Activated CD8-positive, alpha-beta memory T cell treated with anti-CD3 and anti-CD28 coated beads, Interleukin-2, amount 10 ng/mL, durations not matched to agents 7 days and 5 days (primary cell): ENCODE measurements at regions of chr11 and their contacts with region 1.

Region 1: GRCh38 chr11:123054301-123055065 is 7.5 kb downstream of the HSPA8 start:
- DNase-seq: no peak
- ATAC-seq: peak; percentile 48
- H3K4me3 Mint-ChIP-seq: no peak overlapping the region
- H3K27ac Mint-ChIP-seq: peak overlapping the region; percentile 100
- H3K4me1 Mint-ChIP-seq: peaks cover 49% of the 10 kb centered on the region
- H3K27me3 Mint-ChIP-seq: no peaks in the 10 kb centered on the region

Region 2: GRCh38 chr11:123020968-123021367 is 33.5 kb before region 1 on chr11:
- CTCF ChIA-PET with region 1: interaction called, 58 read pairs
- DNase-seq: peak; percentile 53
- ATAC-seq: peak; percentile 86
- H3K4me3 Mint-ChIP-seq: no peak overlapping the region
- H3K27ac Mint-ChIP-seq: no peak overlapping the region
- H3K4me1 Mint-ChIP-seq: peaks cover 9% of the 10 kb centered on the region
- H3K27me3 Mint-ChIP-seq: peaks cover 9% of the 10 kb centered on the region

Region 3: DNA sequence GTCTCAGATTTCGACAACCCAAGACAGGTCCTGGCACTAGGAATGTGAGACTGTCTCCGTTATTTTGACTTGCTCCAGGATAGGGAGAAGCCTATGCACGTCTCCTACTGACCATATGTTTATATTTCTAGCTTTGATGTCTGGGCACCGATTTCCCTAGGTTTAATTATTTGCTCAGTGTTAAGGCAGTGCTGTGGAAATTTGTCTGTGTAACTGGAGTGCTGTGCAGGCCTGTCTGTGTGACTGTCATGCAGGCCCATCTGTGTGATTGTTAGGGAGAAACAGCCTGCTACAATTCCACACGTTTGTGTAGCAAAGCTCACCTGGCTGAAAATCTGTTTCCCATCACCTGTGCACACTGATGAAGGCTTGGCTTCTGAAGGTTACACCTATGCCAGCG is 37.0 kb after region 1 on chr11:
- CTCF ChIA-PET with region 1: interaction called, 25 read pairs
- DNase-seq: no peak
- ATAC-seq: no peak
- H3K4me3 Mint-ChIP-seq: no peak overlapping the region
- H3K27ac Mint-ChIP-seq: no peak overlapping the region
- H3K4me1 Mint-ChIP-seq: peaks cover 18% of the 10 kb centered on the region
- H3K27me3 Mint-ChIP-seq: no peaks in the 10 kb centered on the region

Region 4: GRCh38 chr11:123110356-123110755 is 55.9 kb after region 1 on chr11:
- CTCF ChIA-PET with region 1: interaction called, 17 read pairs
- DNase-seq: no peak
- ATAC-seq: no peak
- H3K4me3 Mint-ChIP-seq: no peak overlapping the region
- H3K27ac Mint-ChIP-seq: no peak overlapping the region
- H3K4me1 Mint-ChIP-seq: no peaks in the 10 kb centered on the region
- H3K27me3 Mint-ChIP-seq: peaks cover 11% of the 10 kb centered on the region

Region 5: DNA sequence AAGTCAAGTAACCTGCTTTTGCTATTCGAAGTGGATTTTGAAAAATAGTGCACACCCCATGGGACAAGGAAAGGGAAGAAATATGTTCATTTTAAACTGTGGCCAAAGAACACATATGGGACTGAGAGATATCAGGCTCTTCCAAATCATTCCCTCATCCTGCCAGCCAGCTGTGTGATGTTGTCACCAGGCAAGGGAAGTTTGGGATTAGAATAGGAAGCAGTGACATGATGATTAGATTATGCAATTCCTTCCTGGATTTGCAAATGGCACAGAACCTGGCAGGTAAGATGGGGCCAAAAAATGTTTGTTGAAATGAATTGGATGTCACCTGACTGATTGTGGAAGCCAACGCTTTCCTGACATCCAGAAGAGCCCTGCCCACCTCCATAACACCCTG is 604.8 kb after region 1 on chr11:
- CTCF ChIA-PET with region 1: no interaction called
- DNase-seq: no peak
- ATAC-seq: no peak
- H3K4me3 Mint-ChIP-seq: no peak overlapping the region
- H3K27ac Mint-ChIP-seq: no peak overlapping the region
- H3K4me1 Mint-ChIP-seq: peaks cover 21% of the 10 kb centered on the region
- H3K27me3 Mint-ChIP-seq: peaks cover 18% of the 10 kb centered on the region